ENCODE measurements at regions of chr19 and their contacts with region 1.

Region 1: DNA sequence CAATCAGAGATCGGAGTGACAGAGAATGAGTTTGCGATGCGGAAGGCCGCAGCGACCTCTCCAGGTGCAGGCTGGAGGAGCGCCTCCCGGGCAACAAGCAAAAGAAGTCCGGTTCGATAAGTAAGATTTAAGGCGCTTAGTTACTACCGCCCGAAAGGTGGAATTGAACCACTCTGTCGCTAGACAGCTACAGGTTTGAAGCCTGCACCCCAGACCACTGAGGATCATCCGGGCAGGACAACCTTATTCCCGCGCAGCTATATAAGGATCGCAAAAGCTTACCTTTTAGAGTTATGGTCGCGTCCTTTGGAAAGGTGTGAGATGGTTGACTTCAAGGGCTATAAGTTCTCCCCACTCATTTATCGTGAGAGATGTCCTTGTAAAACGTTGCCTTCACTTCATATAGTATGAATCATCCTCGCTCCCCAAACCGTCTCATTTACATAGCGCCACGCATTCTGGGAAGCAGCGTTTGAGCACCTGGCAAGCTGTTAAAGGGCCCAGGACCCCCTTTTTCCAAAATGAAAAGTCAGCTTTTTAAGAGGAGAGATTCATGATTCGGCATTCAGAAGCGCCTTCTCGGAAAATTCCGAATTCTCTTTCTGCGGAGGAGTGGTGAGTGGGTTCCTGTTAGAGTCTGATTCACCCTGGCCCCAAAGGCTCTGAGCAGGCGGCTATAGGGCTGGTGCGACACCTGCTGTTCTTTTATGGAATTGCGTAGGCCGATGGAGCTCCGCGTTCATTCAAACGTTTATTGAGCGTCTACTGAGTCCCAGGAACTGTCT is 10.8 kb downstream of the FOSB start:
- DNase-seq: peak; percentile 86
- H3K4me3 ChIP-seq: peak overlapping the region; percentile 43 to 61 (median 58)
- H3K27ac ChIP-seq: peak overlapping the region; percentile 95 to 99
- H3K4me1 ChIP-seq: no peaks in the 10 kb centered on the region
- H3K27me3 ChIP-seq: no peaks in the 10 kb centered on the region
- CTCF ChIP-seq: peak; percentile 93 to 99 (median 98)
- POLR2A ChIP-seq: no peak

Region 2: DNA sequence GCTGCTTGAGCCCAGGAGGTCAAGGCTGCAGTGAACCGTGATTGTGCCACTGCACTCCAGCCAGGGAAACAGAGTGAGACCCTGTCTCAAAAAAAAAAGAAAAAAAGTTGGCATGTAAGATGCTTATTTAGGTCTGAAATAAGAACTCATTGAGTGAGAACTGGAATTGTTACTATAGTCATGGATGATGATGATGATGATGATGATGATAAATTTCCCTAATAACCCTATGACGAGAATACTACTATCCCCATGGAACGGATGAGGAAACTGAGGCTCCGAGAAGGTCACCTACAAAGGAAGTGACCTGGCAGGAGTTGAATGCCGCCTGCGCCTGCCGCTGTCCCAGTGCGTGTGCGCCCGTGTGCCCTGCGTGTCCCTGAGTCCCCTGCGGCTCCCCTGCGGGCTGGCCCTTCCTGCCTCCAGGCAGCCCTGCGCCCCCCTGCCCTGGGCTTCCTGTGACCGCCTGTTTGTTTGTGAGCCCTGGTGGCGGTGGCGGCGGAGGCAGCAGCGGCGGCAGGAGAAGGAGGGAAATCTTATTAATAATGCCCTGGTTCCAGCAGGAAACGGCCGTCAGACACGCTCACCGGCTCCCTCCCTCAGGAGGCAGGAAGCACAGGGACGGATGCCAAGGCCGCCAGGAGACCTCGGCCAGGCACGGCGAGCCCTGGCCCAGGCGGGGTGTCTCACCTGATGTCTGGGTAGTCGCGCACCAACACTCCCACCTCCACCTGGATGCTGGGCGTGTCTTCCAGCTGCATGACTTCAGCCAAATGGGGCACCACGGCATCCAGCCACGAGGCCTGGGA is 263.1 kb before region 1 on chr19:
- intact Hi-C with region 1: no loop called
- DNase-seq: peak; percentile 23 to 60
- H3K4me3 ChIP-seq: peak overlapping the region in 2 of 3 donors; percentile 29 to 55
- H3K27ac ChIP-seq: peak overlapping the region; percentile 50 to 52
- H3K4me1 ChIP-seq: no peaks in the 10 kb centered on the region
- H3K27me3 ChIP-seq: peaks cover 6 to 8% of the 10 kb centered on the region in 2 donors
- CTCF ChIP-seq: no peak
- POLR2A ChIP-seq: no peak

Region 3: DNA sequence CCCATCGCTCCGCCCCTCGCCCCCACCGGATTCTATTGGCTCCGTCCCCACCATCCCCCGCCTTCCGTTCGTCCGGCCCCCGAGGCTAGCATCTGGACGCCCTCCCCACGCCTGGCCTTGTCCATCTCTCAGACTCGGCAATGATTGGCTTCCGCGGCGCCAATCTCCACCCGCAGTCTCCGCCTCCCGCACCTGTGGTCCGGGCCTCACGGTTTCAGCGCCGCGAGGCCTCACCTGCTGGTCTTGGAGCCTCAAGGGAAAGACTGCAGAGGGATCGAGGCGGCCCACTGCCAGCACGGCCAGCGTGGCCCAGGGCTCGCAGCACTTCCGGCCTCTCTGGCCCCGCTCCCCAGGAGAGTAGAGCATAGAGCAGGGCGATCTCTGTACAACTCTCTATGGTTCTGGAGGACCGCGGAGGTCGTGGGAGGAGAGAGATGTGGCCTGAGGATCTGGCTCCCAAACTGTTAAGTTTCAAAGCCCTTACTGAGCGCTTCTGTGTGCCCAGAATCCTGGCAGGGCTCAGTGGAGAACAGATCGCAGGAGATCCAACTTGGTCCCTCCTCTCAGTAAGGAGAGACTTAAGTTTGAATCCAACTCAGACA is 55.0 kb before region 1 on chr19 and contains the start of gene ERCC1:
- intact Hi-C with region 1: loop called (anchors 10 kb)
- DNase-seq: peak; percentile 93 to 95
- H3K4me3 ChIP-seq: peak within 1 kb of the TSS; percentile 60 to 83 (median 68)
- H3K27ac ChIP-seq: peak within 1 kb of the TSS; percentile 90 to 97
- H3K4me1 ChIP-seq: peaks cover 0 to 8% of the 10 kb centered on the region in 2 donors
- H3K27me3 ChIP-seq: no peaks in the 10 kb centered on the region
- CTCF ChIP-seq: no peak
- POLR2A ChIP-seq: peak; percentile 56
- total RNA-seq, gene ERCC1: 89.9 to 96.7 (median 91.2) TPM

Region 4: GRCh38 chr19:45439569-45440254 is 38.9 kb before region 1 on chr19:
- intact Hi-C with region 1: loop called (anchors 2 kb)
- DNase-seq: peak; percentile 69 to 75
- H3K4me3 ChIP-seq: peak overlapping the region; percentile 58 to 88 (median 74)
- H3K27ac ChIP-seq: peak overlapping the region; percentile 96 to 97
- H3K4me1 ChIP-seq: peaks cover 0 to 7% of the 10 kb centered on the region in 2 donors
- H3K27me3 ChIP-seq: no peaks in the 10 kb centered on the region
- CTCF ChIP-seq: peak; percentile 96 to 99 (median 99)
- POLR2A ChIP-seq: no peak

Measured in breast epithelium (tissue), 4 donors.